CD14-positive monocyte (primary cell): ENCODE measurements at regions of chr22 and their contacts with region 1.

Region 1: DNA sequence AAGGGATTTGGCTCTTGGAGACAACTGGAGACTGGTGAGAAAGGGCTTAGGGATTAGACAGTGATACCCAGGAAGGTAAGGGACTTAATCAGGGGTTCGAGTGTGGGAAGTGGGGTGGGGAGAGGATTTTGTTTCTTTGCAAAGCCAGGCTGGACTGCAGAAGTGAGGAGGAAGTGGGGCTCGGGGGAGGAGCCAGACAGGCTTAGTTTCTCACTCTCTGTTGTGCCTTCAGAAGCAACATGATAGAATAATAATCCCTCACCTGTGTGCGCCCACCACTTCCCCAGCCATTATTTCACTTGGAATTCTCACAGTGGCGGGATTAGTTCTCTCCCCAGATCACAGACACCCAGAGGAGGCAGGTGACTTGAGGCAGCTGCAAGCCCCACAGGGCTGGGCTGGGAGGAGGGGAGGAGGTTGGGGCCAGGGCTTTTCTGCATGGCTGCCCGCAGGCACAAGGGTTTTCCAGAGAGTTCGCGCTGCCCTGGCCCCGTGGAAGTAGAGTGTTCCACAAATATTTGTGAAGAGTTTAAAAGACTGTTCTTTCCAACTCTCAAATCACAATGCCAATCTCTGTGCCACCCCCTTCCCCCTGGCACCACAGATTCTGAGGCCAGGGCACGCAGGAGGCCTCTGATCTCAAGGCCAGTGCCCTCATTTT is 4.0 kb upstream of the SEC14L2 start:
- DNase-seq: no peak
- H3K4me3 ChIP-seq: no peak overlapping the region
- H3K4me3 Mint-ChIP-seq: no peak overlapping the region
- H3K27ac ChIP-seq: no peak overlapping the region
- H3K27ac Mint-ChIP-seq: no peak overlapping the region
- H3K4me1 ChIP-seq: peaks cover 5 to 9% of the 10 kb centered on the region in 2 donors
- H3K4me1 Mint-ChIP-seq: peaks cover 14% of the 10 kb centered on the region
- H3K27me3 ChIP-seq: peaks cover 21 to 24% of the 10 kb centered on the region in 2 donors
- H3K27me3 Mint-ChIP-seq: peaks cover 31 to 35% (median 35%) of the 10 kb centered on the region in 3 donors
- CTCF ChIP-seq: no peak

Region 2: DNA sequence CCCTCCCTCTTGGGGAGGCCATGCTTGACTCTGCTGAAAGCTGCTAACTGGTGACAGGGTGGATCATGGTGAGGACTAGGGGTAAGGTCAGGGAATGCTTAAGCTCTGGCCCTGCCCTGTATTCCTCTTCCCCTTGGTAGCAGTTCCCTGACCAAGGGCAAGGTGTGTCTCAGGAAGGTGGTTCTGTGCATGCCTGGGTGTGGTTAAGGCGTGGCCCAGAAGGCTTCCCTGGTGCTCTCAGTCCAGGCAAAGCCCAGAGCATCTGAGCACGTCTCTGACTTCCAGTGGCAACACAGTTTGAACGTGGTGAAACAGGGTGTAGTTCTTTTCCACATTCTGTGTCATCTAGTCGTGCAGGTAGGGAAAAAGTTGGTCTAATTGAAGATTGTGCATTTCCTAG is 365.6 kb before region 1 on chr22:
- intact Hi-C with region 1: no loop called
- DNase-seq: no peak
- H3K4me3 ChIP-seq: no peak overlapping the region
- H3K4me3 Mint-ChIP-seq: no peak overlapping the region
- H3K27ac ChIP-seq: peak overlapping the region in 1 of 2 donors; percentile 37
- H3K27ac Mint-ChIP-seq: peak overlapping the region in 3 of 7 donors; percentile 0 to 75 (median 26)
- H3K4me1 ChIP-seq: peaks cover 0 to 6% of the 10 kb centered on the region in 2 donors
- H3K4me1 Mint-ChIP-seq: peaks cover 3% of the 10 kb centered on the region
- H3K27me3 ChIP-seq: no peaks in the 10 kb centered on the region
- H3K27me3 Mint-ChIP-seq: peaks cover 0 to 2% (median 0%) of the 10 kb centered on the region in 3 donors
- CTCF ChIP-seq: no peak

Region 3: DNA sequence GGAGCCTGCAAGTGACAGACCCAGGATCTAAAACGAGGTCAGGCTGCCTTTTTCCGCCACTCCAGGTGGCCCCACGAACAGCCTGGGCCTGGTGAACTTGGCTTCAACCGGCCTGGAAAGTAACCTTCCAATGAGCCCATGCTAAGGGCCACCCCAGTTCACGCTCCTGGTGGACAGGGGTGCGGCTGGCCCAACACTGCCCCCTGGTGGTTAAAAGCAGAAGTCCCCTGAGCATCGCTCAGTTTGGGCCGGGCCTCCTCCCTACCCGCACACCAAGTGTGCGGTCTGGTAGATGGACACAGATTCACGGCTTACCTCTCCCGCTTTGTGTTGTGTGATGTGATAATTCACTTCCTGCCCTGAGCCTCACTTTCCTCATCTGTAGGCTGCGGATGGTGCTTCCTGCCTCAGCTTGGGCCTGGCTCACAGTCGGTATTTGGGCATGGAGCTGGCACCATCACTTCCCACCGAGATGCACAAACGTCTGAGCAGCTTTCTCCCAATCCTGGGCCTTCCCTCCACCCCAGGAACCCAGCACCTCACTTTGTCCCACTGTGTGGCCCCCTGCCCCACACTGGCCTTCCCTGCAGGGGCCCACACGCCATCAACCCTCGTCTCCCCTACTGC is 92.7 kb after region 1 on chr22:
- intact Hi-C with region 1: loop called (anchors 1 kb)
- DNase-seq: peak; percentile 47 to 68 (median 55)
- H3K4me3 ChIP-seq: no peak overlapping the region
- H3K4me3 Mint-ChIP-seq: no peak overlapping the region
- H3K27ac ChIP-seq: no peak overlapping the region
- H3K27ac Mint-ChIP-seq: peak overlapping the region in 1 of 7 donors; percentile 51
- H3K4me1 ChIP-seq: no peaks in the 10 kb centered on the region
- H3K4me1 Mint-ChIP-seq: no peaks in the 10 kb centered on the region
- H3K27me3 ChIP-seq: no peaks in the 10 kb centered on the region
- H3K27me3 Mint-ChIP-seq: peaks cover 4 to 16% (median 14%) of the 10 kb centered on the region in 3 donors
- CTCF ChIP-seq: peak; percentile 94